Sigmoid colon (tissue), 7 donors: ENCODE measurements at regions of chr13 and their contacts with region 1.

Region 1: GRCh38 chr13:40440990-40441820 is 225.2 kb downstream of the FOXO1 start:
- DNase-seq: peak; percentile 92
- H3K4me3 ChIP-seq: no peak overlapping the region
- H3K27ac ChIP-seq: peak overlapping the region; percentile 73 to 82 (median 78)
- H3K4me1 ChIP-seq: peaks cover 0 to 49% (median 46%) of the 10 kb centered on the region in 4 donors
- H3K27me3 ChIP-seq: no peaks in the 10 kb centered on the region
- CTCF ChIP-seq: no peak
- EP300 ChIP-seq: no peak
- POLR2A ChIP-seq: no peak

Region 2: GRCh38 chr13:40340368-40341095 is 100.7 kb before region 1 on chr13:
- intact Hi-C with region 1: no loop called
- DNase-seq: no peak
- H3K4me3 ChIP-seq: no peak overlapping the region
- H3K27ac ChIP-seq: peak overlapping the region in 3 of 4 donors; percentile 5 to 43 (median 31)
- H3K4me1 ChIP-seq: peaks cover 0 to 37% (median 27%) of the 10 kb centered on the region in 4 donors
- H3K27me3 ChIP-seq: no peaks in the 10 kb centered on the region
- CTCF ChIP-seq: no peak
- EP300 ChIP-seq: no peak
- POLR2A ChIP-seq: no peak

Region 3: GRCh38 chr13:40401911-40402776 is 39.1 kb before region 1 on chr13:
- intact Hi-C with region 1: loop called (anchors 5 kb)
- DNase-seq: peak; percentile 99
- H3K4me3 ChIP-seq: peak overlapping the region in 2 of 4 donors; percentile 22 to 27
- H3K27ac ChIP-seq: peak overlapping the region; percentile 80 to 86 (median 83)
- H3K4me1 ChIP-seq: peaks cover 0 to 58% (median 47%) of the 10 kb centered on the region in 4 donors
- H3K27me3 ChIP-seq: no peaks in the 10 kb centered on the region
- CTCF ChIP-seq: no peak
- EP300 ChIP-seq: peak in 1 of 4 donors; percentile 4
- POLR2A ChIP-seq: no peak

Region 4: GRCh38 chr13:40589285-40590109 is 148.3 kb after region 1 on chr13:
- intact Hi-C with region 1: loop called (anchors 10 kb)
- DNase-seq: peak; percentile 68
- H3K4me3 ChIP-seq: no peak overlapping the region
- H3K27ac ChIP-seq: peak overlapping the region in 3 of 4 donors; percentile 29 to 44 (median 33)
- H3K4me1 ChIP-seq: peaks cover 0 to 71% (median 54%) of the 10 kb centered on the region in 4 donors
- H3K27me3 ChIP-seq: no peaks in the 10 kb centered on the region
- CTCF ChIP-seq: no peak
- EP300 ChIP-seq: no peak
- POLR2A ChIP-seq: no peak